Naive thymus-derived CD8-positive, alpha-beta T cell (primary cell): ENCODE measurements at regions of chr4 and their contacts with region 1.

Region 1: GRCh38 chr4:40275065-40275730 is 59.9 kb upstream of the CHRNA9 start:
- DNase-seq: no peak
- ATAC-seq: peak; percentile 75 to 81
- H3K4me3 Mint-ChIP-seq: peak overlapping the region in 9 of 10 donors; percentile 28 to 79 (median 57)
- H3K27ac Mint-ChIP-seq: peak overlapping the region; percentile 39 to 91 (median 78)
- H3K4me1 Mint-ChIP-seq: peaks cover 26 to 52% (median 44%) of the 10 kb centered on the region in 4 donors
- H3K27me3 Mint-ChIP-seq: no peaks in the 10 kb centered on the region

Region 2: DNA sequence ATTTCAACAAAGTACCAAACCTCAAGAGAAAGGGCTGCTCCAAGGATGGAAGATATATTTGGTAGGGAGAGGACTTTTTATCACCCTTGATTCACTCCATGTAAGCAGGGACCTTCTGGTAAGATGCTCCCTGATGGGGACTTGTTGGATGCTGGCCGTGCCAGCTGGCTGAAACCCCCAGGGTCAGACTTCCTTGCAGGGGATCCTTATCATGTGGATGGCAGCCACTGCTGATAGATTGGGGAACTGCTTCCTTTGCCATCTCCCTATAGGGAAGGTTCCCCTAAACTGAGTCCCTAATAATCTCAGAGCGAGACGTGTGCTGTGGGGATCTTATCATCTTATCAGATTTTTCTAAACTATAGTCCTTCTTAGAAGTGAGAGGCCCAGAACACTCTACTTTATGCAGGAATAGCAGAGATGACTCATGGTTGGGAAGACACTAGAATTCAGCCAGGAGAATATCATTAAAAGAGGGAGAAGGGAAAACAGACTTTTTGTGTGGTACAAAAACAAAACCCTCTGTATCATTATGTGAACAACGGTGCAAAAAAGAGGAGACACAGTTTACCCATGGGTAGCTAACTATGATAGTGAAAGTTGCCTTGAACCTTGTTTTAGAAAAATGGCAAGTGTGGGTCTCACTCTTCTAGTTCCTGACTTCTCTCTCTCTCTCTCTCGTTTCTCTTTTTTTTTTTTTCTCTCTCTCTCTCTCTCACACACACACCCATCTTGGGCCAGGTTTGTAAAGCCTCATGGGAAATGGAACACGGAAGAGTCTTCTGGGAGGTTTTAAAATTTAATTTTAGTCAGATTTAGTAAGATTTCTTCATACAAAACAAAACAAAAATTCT is 62.3 kb before region 1 on chr4:
- POLR2A ChIA-PET with region 1: no interaction called
- DNase-seq: no peak
- ATAC-seq: no peak
- H3K4me3 Mint-ChIP-seq: peak overlapping the region; percentile 55 to 100 (median 78)
- H3K27ac Mint-ChIP-seq: peak overlapping the region; percentile 87 to 98 (median 96)
- H3K4me1 Mint-ChIP-seq: peaks cover 51 to 99% (median 94%) of the 10 kb centered on the region in 4 donors
- H3K27me3 Mint-ChIP-seq: no peaks in the 10 kb centered on the region

Region 3: DNA sequence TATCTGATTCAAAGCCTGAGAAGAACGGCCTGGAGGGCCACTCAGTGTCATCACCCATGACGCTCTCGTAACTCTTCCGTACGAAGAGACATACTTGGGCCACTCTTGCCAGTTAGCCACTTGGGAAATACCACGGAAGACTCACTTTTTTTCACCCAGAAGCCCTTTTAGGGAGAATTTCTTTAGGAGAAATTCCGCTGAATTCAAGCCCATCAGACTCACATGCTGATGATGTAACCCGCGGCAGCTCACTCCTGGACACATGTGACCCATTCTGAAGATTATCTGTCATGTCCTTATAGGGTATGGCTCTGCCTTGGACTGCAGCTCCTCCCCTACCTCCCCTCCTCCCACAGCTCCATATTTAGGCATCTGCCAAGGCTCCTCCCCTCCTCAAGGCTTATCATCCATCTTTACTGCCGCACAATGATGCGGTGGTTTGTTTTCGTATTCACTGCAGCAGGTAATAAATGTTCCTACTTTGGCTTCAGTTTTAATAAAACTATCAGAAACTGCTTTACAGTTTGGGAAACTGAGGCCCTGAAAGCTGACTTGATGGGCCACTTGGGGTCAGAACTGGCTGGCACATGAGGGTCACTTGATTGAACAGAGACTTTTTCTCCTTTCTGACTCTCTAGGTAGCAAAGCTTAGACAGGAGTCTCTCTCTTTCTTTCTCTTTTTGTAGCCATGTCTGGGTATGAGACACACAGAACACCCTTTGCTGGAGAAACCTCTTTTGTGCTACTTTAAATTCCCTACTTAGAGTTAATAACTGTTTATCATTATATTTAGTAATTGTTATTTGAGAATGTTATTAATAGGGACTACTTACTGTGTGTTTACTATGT is 36.3 kb before region 1 on chr4:
- POLR2A ChIA-PET with region 1: interaction called, 11 read pairs
- DNase-seq: peak; percentile 32 to 91 (median 78)
- ATAC-seq: peak; percentile 76 to 92
- H3K4me3 Mint-ChIP-seq: peak overlapping the region; percentile 70 to 89 (median 78)
- H3K27ac Mint-ChIP-seq: peak overlapping the region; percentile 92 to 99 (median 97)
- H3K4me1 Mint-ChIP-seq: peaks cover 43 to 93% (median 91%) of the 10 kb centered on the region in 4 donors
- H3K27me3 Mint-ChIP-seq: no peaks in the 10 kb centered on the region